Transverse colon (tissue), 4 donors: ENCODE measurements at regions of chrX and their contacts with region 1.

Region 1: DNA sequence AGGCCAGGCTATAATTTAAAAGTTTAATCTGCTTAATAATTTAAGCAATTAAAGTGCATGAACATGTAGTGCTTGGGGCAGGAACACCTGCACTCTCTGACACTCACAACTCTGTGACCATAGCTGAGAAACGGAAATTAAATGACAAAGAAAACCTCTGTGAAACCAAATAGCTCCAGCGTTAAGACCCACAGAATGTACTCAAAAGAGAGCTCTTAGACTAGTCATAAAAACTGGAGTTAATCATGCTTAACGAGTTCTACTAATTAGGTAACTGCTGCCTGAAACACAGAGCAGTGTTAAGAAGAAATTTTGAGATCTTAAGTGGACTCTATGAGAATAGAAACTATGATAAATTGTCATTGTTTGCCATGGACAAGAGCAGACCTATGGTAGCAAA is 174.4 kb upstream of the SPIN4 start:
- DNase-seq: no peak
- H3K4me3 ChIP-seq: no peak overlapping the region
- H3K27ac ChIP-seq: no peak overlapping the region
- H3K4me1 ChIP-seq: no peaks in the 10 kb centered on the region
- H3K27me3 ChIP-seq: no peaks in the 10 kb centered on the region
- CTCF ChIP-seq: no peak
- EP300 ChIP-seq: no peak
- POLR2A ChIP-seq: no peak

Region 2: DNA sequence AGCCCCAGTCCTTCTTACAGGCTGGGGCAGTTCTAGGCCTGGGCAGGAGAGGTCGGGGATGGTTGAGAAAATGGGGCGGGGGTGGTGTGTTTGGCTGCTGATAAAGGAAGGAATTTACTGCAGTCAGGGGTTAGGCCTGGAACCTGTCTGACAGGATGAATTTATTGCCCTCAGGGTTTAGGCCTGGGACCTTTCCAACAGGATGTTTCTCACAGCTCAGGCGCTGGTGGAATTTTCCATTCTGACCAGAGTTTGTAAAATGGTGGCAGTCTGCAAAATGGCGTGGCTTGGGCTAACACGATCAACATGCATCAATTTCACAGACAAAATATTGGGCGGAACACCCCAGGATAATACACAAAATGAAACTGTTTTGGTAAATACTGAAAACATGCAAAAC is 90.8 kb before region 1 on chrX:
- in situ Hi-C with region 1: loop called in 1 of 4 experiments (anchors 25 kb)
- intact Hi-C with region 1: no loop called
- DNase-seq: peak; percentile 55
- H3K4me3 ChIP-seq: no peak overlapping the region
- H3K27ac ChIP-seq: peak overlapping the region in 3 of 4 donors; percentile 3 to 45 (median 24)
- H3K4me1 ChIP-seq: peaks cover 0 to 7% (median 2%) of the 10 kb centered on the region in 4 donors
- H3K27me3 ChIP-seq: no peaks in the 10 kb centered on the region
- CTCF ChIP-seq: no peak
- EP300 ChIP-seq: no peak
- POLR2A ChIP-seq: no peak

Region 3: DNA sequence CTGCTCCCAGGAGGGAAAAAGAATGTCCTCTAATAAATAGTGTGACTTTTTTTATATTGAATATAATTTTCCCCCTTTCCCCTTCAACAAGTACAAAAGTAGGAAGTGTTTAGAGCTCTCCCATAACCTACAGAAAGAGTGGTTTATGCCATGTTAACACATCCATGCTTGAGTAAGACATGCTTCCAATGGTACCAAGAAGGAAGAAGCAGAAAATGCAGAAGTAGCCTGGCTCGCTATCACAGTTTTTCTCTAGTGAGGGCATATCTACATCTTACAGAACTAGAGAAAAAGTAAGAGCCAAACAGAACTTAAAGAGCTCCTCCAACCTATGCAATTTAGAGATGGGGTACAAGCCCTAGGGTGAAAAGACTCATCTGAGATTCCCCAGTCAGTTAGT is 177.1 kb after region 1 on chrX:
- in situ Hi-C with region 1: no loop called
- intact Hi-C with region 1: no loop called
- DNase-seq: no peak
- H3K4me3 ChIP-seq: no peak overlapping the region
- H3K27ac ChIP-seq: no peak overlapping the region
- H3K4me1 ChIP-seq: no peaks in the 10 kb centered on the region
- H3K27me3 ChIP-seq: no peaks in the 10 kb centered on the region
- CTCF ChIP-seq: no peak
- EP300 ChIP-seq: no peak
- POLR2A ChIP-seq: no peak

Region 4: DNA sequence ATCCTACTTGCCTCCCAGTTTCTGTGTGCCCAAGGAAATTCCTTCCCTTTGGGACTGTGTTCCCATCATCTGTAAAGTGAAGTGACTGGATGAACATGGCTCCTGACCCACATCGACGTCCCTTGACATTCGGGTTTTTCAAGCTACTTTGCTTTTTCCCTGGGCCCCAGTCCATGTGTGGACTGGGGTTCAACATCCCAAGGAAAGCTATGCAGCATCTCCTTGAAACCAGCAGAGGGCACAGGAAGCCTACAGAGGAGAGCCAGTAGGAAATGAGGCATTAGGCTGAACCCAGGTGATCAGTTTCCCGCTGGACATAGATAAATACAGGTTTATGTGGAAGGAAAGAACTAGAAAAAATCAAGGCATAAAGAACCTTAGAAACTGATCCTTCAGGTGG is 404.6 kb after region 1 on chrX:
- in situ Hi-C with region 1: no loop called
- intact Hi-C with region 1: no loop called
- DNase-seq: no peak
- H3K4me3 ChIP-seq: no peak overlapping the region
- H3K27ac ChIP-seq: no peak overlapping the region
- H3K4me1 ChIP-seq: no peaks in the 10 kb centered on the region
- H3K27me3 ChIP-seq: no peaks in the 10 kb centered on the region
- CTCF ChIP-seq: no peak
- EP300 ChIP-seq: no peak
- POLR2A ChIP-seq: no peak